Dorsolateral prefrontal cortex (tissue), 120 donors: ENCODE measurements at regions of chr13 and their contacts with region 1.

Region 1: DNA sequence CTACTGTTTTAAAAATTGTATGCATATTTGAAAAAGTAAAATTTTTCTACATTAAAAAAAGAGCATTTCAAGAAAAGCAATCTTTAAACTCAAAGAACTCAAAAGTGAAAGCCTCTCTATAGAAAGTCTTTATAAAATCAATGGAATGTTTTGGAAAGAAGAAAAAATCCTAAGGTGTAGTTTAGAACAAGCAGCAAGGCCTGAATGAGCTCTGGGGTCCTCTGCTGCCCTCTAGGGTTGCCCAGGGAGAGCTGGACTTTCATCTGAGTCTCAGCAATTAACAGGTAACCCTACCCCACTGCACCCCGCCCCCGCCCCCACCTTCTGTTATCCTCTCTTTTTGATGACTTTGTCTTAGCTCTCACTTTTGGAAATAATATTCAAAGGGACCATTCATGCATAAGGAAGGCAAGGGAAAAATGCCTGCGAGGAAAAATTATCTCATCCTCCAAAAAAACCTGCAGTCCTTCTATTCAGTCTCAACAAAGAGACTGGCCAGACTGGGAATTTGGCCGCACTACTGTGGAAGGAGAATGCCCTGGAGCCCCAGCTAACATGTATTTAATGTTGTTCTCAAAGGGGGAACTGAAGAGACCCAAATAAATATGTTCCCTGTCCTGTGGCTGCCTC is 24.1 kb downstream of the SLC25A30 start:
- DNase-seq: peak in 7 of 10 donors; percentile 43 to 53 (median 49)
- H3K4me3 ChIP-seq: no peak overlapping the region
- H3K27ac ChIP-seq: peak overlapping the region in 2 of 59 donors; percentile 1 to 18
- H3K27me3 ChIP-seq: no peaks in the 10 kb centered on the region
- CTCF ChIP-seq: peak in 55 of 56 donors; percentile 28 to 72 (median 55)

Region 2: DNA sequence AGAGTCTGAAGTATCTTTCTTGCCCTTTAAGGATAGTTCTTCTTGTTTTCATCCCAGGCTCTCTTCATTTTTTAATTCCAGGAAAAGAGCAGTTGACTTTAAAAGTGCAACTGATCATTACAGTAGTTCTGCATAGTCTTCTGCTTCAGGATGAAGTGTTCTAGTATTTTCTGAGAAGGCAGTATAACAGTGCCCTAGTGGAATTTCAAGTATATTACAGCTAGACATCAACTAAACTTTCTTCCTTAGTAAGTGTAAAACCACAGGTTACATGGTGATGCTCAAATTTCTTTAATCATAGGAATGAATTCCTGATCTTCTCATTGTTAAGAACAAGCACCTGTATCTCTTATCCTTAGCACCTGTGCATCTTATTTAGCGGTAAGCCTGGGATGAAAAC is 415.7 kb before region 1 on chr13:
- intact Hi-C with region 1: loop called in 1 of 2 experiments (anchors 5 kb)
- DNase-seq: no peak
- H3K4me3 ChIP-seq: no peak overlapping the region
- H3K27ac ChIP-seq: no peak overlapping the region
- H3K27me3 ChIP-seq: no peaks in the 10 kb centered on the region
- CTCF ChIP-seq: peak in 6 of 56 donors; percentile 6 to 39 (median 23)